AG04450 (cell line): ENCODE measurements at regions of chr9 and their contacts with region 1.

Region 1: DNA sequence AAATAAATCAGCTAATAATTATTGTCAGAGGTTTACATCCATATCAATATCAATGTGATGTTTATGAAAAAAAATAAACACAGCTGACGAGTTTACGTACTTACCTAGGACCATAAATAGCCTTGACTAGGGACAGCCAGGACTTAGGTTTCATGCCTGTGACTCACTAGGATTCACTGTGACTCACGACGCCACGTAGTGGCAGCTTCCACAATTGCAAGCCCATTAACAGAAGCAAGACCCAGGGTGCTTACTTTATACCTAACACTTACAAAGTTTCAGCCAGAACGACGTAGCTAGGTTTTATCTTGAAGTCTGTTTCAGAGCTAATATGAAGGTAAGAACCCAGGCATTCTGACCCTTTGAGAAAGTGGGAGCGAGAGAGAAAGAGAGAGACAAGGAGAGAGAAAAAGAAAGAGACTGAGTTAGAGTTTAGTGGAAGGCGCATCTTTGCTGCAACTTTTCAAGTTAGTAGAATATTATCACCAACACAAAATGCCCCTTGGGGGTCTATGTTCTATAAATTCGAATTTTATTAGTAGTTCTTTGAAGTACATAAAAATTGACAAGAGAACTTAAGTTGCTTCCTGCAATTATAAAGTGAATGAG is 191.2 kb downstream of the GNA14 start:
- DNase-seq: peak; percentile 77
- H3K4me3 ChIP-seq: no peak overlapping the region
- H3K27ac ChIP-seq: no peak overlapping the region
- H3K27me3 ChIP-seq: no peaks in the 10 kb centered on the region
- CTCF ChIP-seq: peak; percentile 93

Region 2: DNA sequence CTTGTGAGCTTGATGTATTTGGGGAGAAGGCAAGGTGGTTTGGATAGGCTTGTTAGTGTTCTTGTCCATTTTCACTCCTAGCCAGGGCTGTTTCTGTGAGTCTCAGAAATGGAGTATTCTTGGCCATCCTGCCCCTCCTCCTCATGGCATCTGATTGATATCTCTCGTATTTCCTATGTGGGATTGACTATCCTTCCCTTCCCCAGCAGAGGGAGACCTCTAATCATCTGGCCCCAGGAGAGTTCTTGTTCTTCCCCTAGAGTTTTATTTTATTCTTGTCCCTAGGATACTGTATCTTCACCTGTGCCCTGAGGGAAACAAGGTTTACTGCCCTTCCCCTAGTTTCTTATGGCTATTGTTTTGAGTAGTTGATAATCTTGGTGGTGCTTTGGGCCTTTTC is 165.2 kb before region 1 on chr9:
- CTCF ChIA-PET with region 1: interaction called, 10 read pairs
- POLR2A ChIA-PET with region 1: no interaction called
- DNase-seq: no peak
- H3K4me3 ChIP-seq: no peak overlapping the region
- H3K27ac ChIP-seq: no peak overlapping the region
- H3K27me3 ChIP-seq: no peaks in the 10 kb centered on the region
- CTCF ChIP-seq: peak; percentile 60

Region 3: GRCh38 chr9:77424993-77425392 is 31.9 kb before region 1 on chr9:
- CTCF ChIA-PET with region 1: interaction called, 12 read pairs
- POLR2A ChIA-PET with region 1: no interaction called
- DNase-seq: no peak
- H3K4me3 ChIP-seq: no peak overlapping the region
- H3K27ac ChIP-seq: no peak overlapping the region
- H3K27me3 ChIP-seq: no peaks in the 10 kb centered on the region
- CTCF ChIP-seq: no peak

Region 4: GRCh38 chr9:77440057-77440456 is 16.9 kb before region 1 on chr9:
- CTCF ChIA-PET with region 1: interaction called, 115 read pairs
- POLR2A ChIA-PET with region 1: no interaction called
- DNase-seq: no peak
- H3K4me3 ChIP-seq: peak overlapping the region; percentile 22
- H3K27ac ChIP-seq: no peak overlapping the region
- H3K27me3 ChIP-seq: peaks cover 2% of the 10 kb centered on the region
- CTCF ChIP-seq: no peak

Region 5: GRCh38 chr9:77488439-77489126 is 31.6 kb after region 1 on chr9:
- CTCF ChIA-PET with region 1: interaction called, 53 read pairs
- POLR2A ChIA-PET with region 1: no interaction called
- DNase-seq: no peak
- H3K4me3 ChIP-seq: no peak overlapping the region
- H3K27ac ChIP-seq: no peak overlapping the region
- H3K27me3 ChIP-seq: no peaks in the 10 kb centered on the region
- CTCF ChIP-seq: peak; percentile 63

Region 6: GRCh38 chr9:77751341-77752091 is 294.6 kb after region 1 on chr9:
- CTCF ChIA-PET with region 1: interaction called, 83 read pairs
- POLR2A ChIA-PET with region 1: no interaction called
- DNase-seq: peak; percentile 26
- H3K4me3 ChIP-seq: no peak overlapping the region
- H3K27ac ChIP-seq: no peak overlapping the region
- H3K27me3 ChIP-seq: no peaks in the 10 kb centered on the region
- CTCF ChIP-seq: peak; percentile 63

Region 7: GRCh38 chr9:78035383-78035993 is 578.6 kb after region 1 on chr9:
- CTCF ChIA-PET with region 1: interaction called, 35 read pairs
- POLR2A ChIA-PET with region 1: no interaction called
- DNase-seq: peak; percentile 72
- H3K4me3 ChIP-seq: no peak overlapping the region
- H3K27ac ChIP-seq: no peak overlapping the region
- H3K27me3 ChIP-seq: no peaks in the 10 kb centered on the region
- CTCF ChIP-seq: peak; percentile 89